OCI-LY7 (cell line): ENCODE measurements at regions of chr11 and their contacts with region 1.

Region 1: DNA sequence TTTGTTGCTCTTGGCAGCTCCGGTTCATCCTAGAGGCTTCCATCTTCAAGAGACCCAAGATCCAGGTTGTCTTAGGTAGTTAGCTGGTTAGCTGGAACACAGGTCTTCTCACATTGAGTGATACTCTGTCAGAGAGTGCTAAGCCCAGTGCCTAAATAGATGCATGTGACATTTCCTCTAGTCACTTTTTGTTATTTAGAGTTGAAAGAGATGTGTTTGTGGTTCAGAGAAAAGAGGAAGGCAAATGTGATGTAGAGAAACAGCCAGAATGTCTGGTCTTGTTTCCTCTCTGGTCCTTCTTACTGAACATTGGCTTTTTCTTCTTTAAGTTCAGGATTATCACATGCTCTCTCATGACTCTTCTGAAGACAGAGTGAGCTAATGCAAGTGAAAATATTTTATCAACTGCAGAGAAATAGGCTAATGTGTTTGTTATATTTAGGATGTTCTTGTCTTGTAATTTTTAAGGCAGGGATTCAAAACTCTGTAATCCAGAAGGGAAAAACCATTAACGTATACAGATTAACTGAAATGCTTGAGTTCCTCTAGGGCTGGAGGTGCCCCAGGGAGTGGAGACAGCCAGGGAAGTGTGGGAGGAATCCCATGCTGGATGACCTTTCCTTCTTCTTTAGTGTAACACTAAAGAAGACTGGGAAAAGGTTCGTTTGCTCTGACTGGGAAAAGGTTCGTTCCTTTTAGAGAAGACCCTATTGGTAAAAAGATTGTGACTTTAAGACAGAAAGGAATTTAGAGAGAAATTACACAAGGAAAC is 75.4 kb downstream of the SWAP70 start:
- DNase-seq: peak; percentile 81
- H3K4me3 ChIP-seq: peak overlapping the region; percentile 47
- H3K27ac ChIP-seq: peak overlapping the region; percentile 94
- H3K4me1 ChIP-seq: peaks cover 72% of the 10 kb centered on the region
- CTCF ChIP-seq: no peak

Region 2: DNA sequence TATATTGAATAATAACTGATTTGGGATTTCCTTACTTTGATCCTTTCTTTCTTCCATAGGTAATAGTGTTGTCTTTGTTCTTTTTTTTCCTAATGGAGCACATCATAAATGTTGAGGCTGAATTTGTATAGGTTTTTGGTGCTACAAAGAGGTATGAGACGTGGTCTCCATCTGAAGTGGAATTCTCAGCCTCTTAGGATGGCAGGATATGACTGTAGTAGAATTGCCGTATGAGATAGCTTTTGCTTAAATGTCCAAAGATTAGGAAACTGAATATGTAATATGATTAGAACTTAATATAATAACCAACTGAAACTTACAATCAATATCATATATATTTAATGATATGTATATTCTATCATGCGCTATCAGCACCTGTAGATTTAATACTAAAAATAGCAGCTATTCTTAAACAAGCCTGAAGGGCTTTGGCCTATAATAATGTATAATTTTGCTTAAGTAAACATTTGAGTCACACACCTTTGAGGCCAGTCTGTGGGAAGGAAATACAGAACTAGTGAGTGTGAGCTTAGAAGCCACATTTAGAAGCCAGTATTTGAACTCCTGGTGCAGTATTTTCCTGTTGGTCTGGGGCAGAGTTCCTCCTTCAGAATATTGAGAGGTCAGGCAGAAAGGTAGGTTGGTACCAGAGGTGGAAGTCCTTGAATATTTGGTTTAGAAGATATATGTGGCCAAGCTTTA is 12.8 kb before region 1 on chr11:
- CTCF ChIA-PET with region 1: no interaction called
- POLR2A ChIA-PET with region 1: interaction called, 33 read pairs
- intact Hi-C with region 1: no loop called
- DNase-seq: no peak
- H3K4me3 ChIP-seq: no peak overlapping the region
- H3K27ac ChIP-seq: peak overlapping the region; percentile 32
- H3K4me1 ChIP-seq: peaks cover 69% of the 10 kb centered on the region
- CTCF ChIP-seq: no peak